GM10248 (cell line): ENCODE measurements at regions of chr17 and their contacts with region 1.

Region 1: GRCh38 chr17:76506408-76507349 is 5.5 kb upstream of the RHBDF2 start:
- DNase-seq: peak; percentile 88
- CTCF ChIP-seq: peak; percentile 89

Region 2: DNA sequence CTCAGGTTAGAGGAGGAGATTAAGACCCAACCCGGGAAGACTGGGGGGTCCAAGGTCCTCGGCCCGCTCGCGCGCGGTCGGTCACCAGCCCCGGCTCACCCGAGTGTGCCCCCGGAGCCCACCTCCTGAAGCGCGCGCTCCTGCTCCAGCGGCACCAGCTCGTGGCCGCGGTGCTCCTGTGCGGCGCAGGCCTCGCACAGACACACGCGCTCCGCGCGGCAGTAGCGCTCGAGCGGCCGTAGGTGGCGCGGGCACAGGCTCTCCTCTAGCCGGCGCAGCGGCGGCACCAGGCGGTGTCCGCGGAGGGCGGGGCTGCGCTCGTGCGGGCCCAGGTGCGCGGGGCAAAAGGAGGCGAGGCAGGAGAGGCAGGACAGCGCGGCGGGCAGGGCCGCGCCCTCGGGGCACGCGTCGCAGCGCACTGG is 628.9 kb before region 1 on chr17:
- CTCF ChIA-PET with region 1: no interaction called
- POLR2A ChIA-PET with region 1: no interaction called
- DNase-seq: peak; percentile 73
- CTCF ChIP-seq: peak; percentile 56

Region 3: DNA sequence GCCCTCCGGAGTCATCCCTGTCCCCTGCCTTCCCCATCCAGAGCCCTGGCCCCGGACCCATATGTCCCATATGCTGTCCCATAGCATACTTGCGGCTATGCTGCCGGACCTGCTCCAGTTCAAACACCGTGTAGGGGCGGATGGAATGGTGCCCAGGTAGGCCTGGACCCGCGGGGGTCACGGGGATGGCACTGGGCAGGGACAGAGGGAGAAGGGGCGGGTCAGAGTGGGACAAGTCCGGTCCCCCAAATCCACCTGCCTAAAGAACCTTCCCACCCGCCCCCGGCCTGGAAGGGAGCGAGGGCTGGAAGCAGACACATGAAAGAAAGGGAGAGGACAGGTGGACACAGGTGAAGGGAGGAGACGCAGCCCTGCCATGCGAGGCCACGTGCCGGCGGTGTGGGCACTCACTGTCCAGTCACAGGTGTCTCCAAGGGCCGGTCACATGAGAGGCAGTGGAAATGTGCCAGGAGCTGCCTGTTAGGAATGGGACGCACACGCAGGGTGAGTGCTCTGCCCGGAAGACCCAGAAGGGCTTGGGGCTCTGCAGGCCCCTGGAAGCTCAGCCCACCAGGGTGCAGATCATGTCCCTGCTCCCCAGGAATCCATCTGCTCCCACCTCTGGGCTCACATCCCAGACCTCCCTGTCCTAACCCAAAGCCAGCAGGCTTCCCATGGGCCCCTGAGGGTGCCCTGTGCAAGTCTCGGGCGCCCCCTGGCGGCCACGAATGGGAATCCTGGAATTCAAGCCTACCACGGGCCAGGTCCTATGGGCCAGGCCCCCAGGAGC is 227.5 kb before region 1 on chr17:
- CTCF ChIA-PET with region 1: no interaction called
- POLR2A ChIA-PET with region 1: no interaction called
- DNase-seq: peak; percentile 90
- CTCF ChIP-seq: peak; percentile 92

Region 4: GRCh38 chr17:76473541-76473985 is 33.1 kb before region 1 on chr17:
- CTCF ChIA-PET with region 1: interaction called, 496 read pairs
- POLR2A ChIA-PET with region 1: no interaction called
- DNase-seq: no peak
- CTCF ChIP-seq: peak; percentile 24

Region 5: DNA sequence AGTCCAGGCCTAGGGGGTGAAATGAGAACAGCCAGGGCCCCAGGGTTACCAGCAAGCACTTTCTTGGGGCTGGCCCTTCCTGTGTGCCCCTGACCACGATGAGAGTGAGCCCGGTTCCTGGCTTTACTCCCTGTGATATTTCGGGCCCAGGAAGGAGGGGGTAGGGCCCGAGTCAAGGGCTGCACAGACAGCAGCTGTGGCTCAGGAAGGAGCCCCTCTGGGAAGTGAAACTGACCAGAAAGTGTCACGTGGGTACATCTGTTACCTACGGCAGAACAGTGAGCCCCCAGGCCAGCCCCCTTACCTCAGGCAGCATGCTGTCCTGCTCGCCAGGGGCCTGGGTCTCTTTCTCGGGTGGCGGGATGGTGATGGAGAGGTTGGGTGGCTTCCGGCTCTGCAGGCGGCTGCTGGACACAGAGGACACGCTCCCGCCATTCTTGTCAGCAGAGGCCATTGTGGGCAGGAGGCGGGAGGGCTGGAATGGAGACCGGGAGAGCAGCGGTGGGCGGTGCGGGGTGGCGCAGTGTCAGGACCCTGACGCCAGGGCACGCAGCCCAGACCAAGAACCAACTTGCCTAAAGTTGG is 25.5 kb before region 1 on chr17:
- CTCF ChIA-PET with region 1: interaction called, 12 read pairs
- POLR2A ChIA-PET with region 1: interaction called, 7 read pairs
- DNase-seq: peak; percentile 81
- CTCF ChIP-seq: no peak

Region 6: GRCh38 chr17:76492989-76493501 is 13.6 kb before region 1 on chr17:
- CTCF ChIA-PET with region 1: interaction called, 50 read pairs
- POLR2A ChIA-PET with region 1: no interaction called
- DNase-seq: peak; percentile 69
- CTCF ChIP-seq: no peak

Region 7: GRCh38 chr17:76611749-76612512 is 105.3 kb after region 1 on chr17:
- CTCF ChIA-PET with region 1: no interaction called
- POLR2A ChIA-PET with region 1: no interaction called
- DNase-seq: no peak
- CTCF ChIP-seq: no peak